CD8-positive, alpha-beta T cell (primary cell): ENCODE measurements at regions of chr10 and their contacts with region 1.

Region 1: DNA sequence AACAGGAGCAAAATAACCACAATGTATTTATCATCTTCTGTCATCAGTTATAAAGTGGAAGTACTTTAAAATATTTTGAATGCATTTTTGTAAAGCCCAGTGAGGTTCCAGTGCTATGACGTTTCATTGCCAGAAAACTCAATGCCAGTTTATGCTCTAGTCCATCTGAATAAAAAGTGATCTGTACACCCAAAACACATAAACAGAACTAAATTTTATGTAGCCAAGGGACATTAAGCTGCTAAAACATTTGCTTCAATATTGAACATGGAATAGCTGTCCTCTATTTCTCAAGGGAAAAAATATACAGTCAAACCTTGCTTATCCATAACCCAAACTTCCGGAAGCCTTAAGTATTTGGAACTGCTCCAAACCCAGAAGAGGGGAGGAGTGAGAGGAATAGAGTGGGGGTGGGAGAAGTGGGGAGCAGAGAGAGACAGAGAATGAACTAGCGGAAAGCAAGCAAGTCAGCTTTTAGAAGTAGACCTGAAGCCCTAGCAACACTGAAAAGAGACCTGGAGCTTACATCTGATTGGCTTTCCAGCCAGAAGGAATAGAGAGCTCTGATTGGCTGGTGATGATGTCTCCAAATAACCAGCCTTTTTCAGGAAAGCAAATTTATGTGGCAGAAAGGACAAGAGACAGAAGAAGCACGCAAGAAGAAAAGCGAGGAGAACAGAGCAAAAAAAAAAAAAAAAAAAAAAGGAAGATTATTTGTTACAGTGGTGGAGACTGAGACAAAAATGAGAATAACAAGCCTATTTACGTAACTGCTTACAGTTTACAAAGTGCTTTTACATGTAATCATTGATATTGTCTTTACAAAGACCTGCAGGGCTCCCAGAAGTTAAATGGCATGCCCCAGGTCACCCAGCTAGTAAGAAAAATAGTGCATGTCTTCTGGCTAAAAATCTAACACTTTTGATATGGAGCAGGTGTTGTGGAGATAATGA is 196.0 kb downstream of the RNLS start:
- DNase-seq: peak in 2 of 9 experiments; percentile 28 to 59
- ATAC-seq: peak; percentile 57
- H3K4me3 ChIP-seq: no peak overlapping the region
- H3K4me3 Mint-ChIP-seq: no peak overlapping the region
- H3K27ac ChIP-seq: peak overlapping the region; percentile 80 to 86
- H3K27ac Mint-ChIP-seq: no peak overlapping the region
- H3K4me1 ChIP-seq: peaks cover 73% of the 10 kb centered on the region
- H3K4me1 Mint-ChIP-seq: peaks cover 34% of the 10 kb centered on the region
- H3K27me3 ChIP-seq: no peaks in the 10 kb centered on the region
- H3K27me3 Mint-ChIP-seq: no peaks in the 10 kb centered on the region
- CTCF ChIP-seq: no peak

Region 2: GRCh38 chr10:87817609-87818504 is 569.2 kb before region 1 on chr10 and contains the start of gene ATAD1:
- CTCF ChIA-PET with region 1: no interaction called
- POLR2A ChIA-PET with region 1: no interaction called
- intact Hi-C with region 1: loop called in 1 of 2 experiments (anchors 1 kb)
- DNase-seq: peak; percentile 79 to 96 (median 88)
- ATAC-seq: peak; percentile 84
- H3K4me3 ChIP-seq: peak within 1 kb of the TSS; percentile 83 to 87
- H3K4me3 Mint-ChIP-seq: peak within 1 kb of the TSS; percentile 94
- H3K27ac ChIP-seq: peak within 1 kb of the TSS; percentile 89 to 95
- H3K27ac Mint-ChIP-seq: peak within 1 kb of the TSS; percentile 100
- H3K4me1 ChIP-seq: peaks cover 26% of the 10 kb centered on the region
- H3K4me1 Mint-ChIP-seq: peaks cover 45% of the 10 kb centered on the region
- H3K27me3 ChIP-seq: no peaks in the 10 kb centered on the region
- H3K27me3 Mint-ChIP-seq: no peaks in the 10 kb centered on the region
- CTCF ChIP-seq: peak; percentile 20
- total RNA-seq, gene ATAD1: 36.9 to 39.0 TPM

Region 3: GRCh38 chr10:88064608-88065382 is 322.3 kb before region 1 on chr10:
- CTCF ChIA-PET with region 1: interaction called, 5 read pairs
- POLR2A ChIA-PET with region 1: interaction called, 4 read pairs
- intact Hi-C with region 1: loop called in 1 of 2 experiments (anchors 2 kb)
- DNase-seq: peak in 4 of 9 experiments; percentile 29 to 81 (median 59)
- ATAC-seq: peak; percentile 88
- H3K4me3 ChIP-seq: no peak overlapping the region
- H3K4me3 Mint-ChIP-seq: no peak overlapping the region
- H3K27ac ChIP-seq: peak overlapping the region in 1 of 2 experiments; percentile 55
- H3K27ac Mint-ChIP-seq: peak overlapping the region; percentile 82
- H3K4me1 ChIP-seq: peaks cover 89% of the 10 kb centered on the region
- H3K4me1 Mint-ChIP-seq: peaks cover 79% of the 10 kb centered on the region
- H3K27me3 ChIP-seq: no peaks in the 10 kb centered on the region
- H3K27me3 Mint-ChIP-seq: no peaks in the 10 kb centered on the region
- CTCF ChIP-seq: no peak

Region 4: GRCh38 chr10:88114368-88114767 is 272.7 kb before region 1 on chr10:
- CTCF ChIA-PET with region 1: interaction called, 22 read pairs
- POLR2A ChIA-PET with region 1: no interaction called
- intact Hi-C with region 1: loop called in 1 of 2 experiments (anchors 2 kb)
- DNase-seq: peak in 3 of 9 experiments; percentile 17 to 64 (median 52)
- ATAC-seq: peak; percentile 47
- H3K4me3 ChIP-seq: no peak overlapping the region
- H3K4me3 Mint-ChIP-seq: no peak overlapping the region
- H3K27ac ChIP-seq: no peak overlapping the region
- H3K27ac Mint-ChIP-seq: no peak overlapping the region
- H3K4me1 ChIP-seq: peaks cover 23% of the 10 kb centered on the region
- H3K4me1 Mint-ChIP-seq: peaks cover 16% of the 10 kb centered on the region
- H3K27me3 ChIP-seq: no peaks in the 10 kb centered on the region
- H3K27me3 Mint-ChIP-seq: no peaks in the 10 kb centered on the region
- CTCF ChIP-seq: no peak

Region 5: GRCh38 chr10:88270871-88271713 is 116.0 kb before region 1 on chr10:
- CTCF ChIA-PET with region 1: no interaction called
- POLR2A ChIA-PET with region 1: no interaction called
- intact Hi-C with region 1: loop called in 1 of 2 experiments (anchors 5 kb)
- DNase-seq: peak in 7 of 9 experiments; percentile 14 to 72 (median 28)
- ATAC-seq: peak; percentile 72
- H3K4me3 ChIP-seq: no peak overlapping the region
- H3K4me3 Mint-ChIP-seq: peak overlapping the region; percentile 69
- H3K27ac ChIP-seq: peak overlapping the region in 1 of 2 experiments; percentile 47
- H3K27ac Mint-ChIP-seq: peak overlapping the region; percentile 88
- H3K4me1 ChIP-seq: peaks cover 26% of the 10 kb centered on the region
- H3K4me1 Mint-ChIP-seq: peaks cover 41% of the 10 kb centered on the region
- H3K27me3 ChIP-seq: no peaks in the 10 kb centered on the region
- H3K27me3 Mint-ChIP-seq: no peaks in the 10 kb centered on the region
- CTCF ChIP-seq: no peak

Region 6: DNA sequence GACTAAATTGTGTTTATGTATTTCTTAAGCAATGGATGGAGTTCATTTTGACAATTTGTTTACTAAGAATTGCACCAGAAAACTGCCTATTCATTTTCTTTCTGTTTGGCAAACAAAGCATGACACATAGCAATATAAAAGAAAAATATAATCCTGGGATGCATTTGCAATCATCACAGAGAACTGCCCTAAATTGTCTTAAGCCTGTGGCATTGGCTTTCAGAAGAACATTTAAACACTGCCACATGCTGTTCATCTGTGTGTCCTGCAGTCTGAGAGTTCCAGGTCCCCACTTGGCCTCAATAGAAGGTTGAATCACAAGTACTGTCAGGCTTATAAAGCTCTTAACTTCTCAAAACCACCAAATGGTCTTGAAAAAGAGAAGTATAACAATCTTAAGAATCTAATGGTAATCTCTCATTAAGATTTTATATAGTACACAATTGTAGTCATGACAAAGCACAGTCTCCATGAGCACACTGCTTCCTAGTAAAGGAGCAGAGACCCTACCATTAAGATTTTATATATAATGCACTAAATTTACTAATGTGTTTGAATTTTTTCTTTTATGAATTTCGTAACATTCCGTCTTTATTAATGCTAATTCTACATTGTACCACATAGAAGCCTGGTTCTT is 166.1 kb after region 1 on chr10:
- CTCF ChIA-PET with region 1: interaction called, 4 read pairs
- POLR2A ChIA-PET with region 1: no interaction called
- intact Hi-C with region 1: loop called (anchors 5 to 10 kb)
- DNase-seq: peak in 6 of 9 experiments; percentile 7 to 71 (median 28)
- ATAC-seq: peak; percentile 82
- H3K4me3 ChIP-seq: no peak overlapping the region
- H3K4me3 Mint-ChIP-seq: no peak overlapping the region
- H3K27ac ChIP-seq: no peak overlapping the region
- H3K27ac Mint-ChIP-seq: no peak overlapping the region
- H3K4me1 ChIP-seq: no peaks in the 10 kb centered on the region
- H3K4me1 Mint-ChIP-seq: no peaks in the 10 kb centered on the region
- H3K27me3 ChIP-seq: no peaks in the 10 kb centered on the region
- H3K27me3 Mint-ChIP-seq: no peaks in the 10 kb centered on the region
- CTCF ChIP-seq: peak; percentile 77

Region 7: GRCh38 chr10:88810196-88810961 is 423.3 kb after region 1 on chr10:
- CTCF ChIA-PET with region 1: no interaction called
- POLR2A ChIA-PET with region 1: no interaction called
- intact Hi-C with region 1: loop called in 1 of 2 experiments (anchors 10 kb)
- DNase-seq: peak in 5 of 9 experiments; percentile 20 to 77 (median 35)
- ATAC-seq: peak; percentile 73
- H3K4me3 ChIP-seq: no peak overlapping the region
- H3K4me3 Mint-ChIP-seq: no peak overlapping the region
- H3K27ac ChIP-seq: no peak overlapping the region
- H3K27ac Mint-ChIP-seq: no peak overlapping the region
- H3K4me1 ChIP-seq: peaks cover 6% of the 10 kb centered on the region
- H3K4me1 Mint-ChIP-seq: peaks cover 17% of the 10 kb centered on the region
- H3K27me3 ChIP-seq: no peaks in the 10 kb centered on the region
- H3K27me3 Mint-ChIP-seq: no peaks in the 10 kb centered on the region
- CTCF ChIP-seq: peak; percentile 66